ENCODE measurements at regions of chrX and their contacts with region 1.

Region 1: GRCh38 chrX:101595739-101596419 is 21.9 kb downstream of the ARMCX6 start:
- DNase-seq: peak; percentile 48
- H3K4me3 ChIP-seq: no peak overlapping the region
- H3K27ac ChIP-seq: no peak overlapping the region
- H3K4me1 ChIP-seq: no peaks in the 10 kb centered on the region
- H3K27me3 ChIP-seq: no peaks in the 10 kb centered on the region
- CTCF ChIP-seq: peak; percentile 55 to 57

Region 2: GRCh38 chrX:101415180-101416145 is 180.4 kb before region 1 on chrX:
- CTCF ChIA-PET with region 1: no interaction called
- dilution Hi-C with region 1: no loop called
- in situ Hi-C with region 1: no loop called
- intact Hi-C with region 1: loop called (anchors 5 kb)
- DNase-seq: peak; percentile 53
- H3K4me3 ChIP-seq: no peak overlapping the region
- H3K27ac ChIP-seq: no peak overlapping the region
- H3K4me1 ChIP-seq: peaks cover 3% of the 10 kb centered on the region
- H3K27me3 ChIP-seq: no peaks in the 10 kb centered on the region
- CTCF ChIP-seq: peak; percentile 62 to 78

Region 3: DNA sequence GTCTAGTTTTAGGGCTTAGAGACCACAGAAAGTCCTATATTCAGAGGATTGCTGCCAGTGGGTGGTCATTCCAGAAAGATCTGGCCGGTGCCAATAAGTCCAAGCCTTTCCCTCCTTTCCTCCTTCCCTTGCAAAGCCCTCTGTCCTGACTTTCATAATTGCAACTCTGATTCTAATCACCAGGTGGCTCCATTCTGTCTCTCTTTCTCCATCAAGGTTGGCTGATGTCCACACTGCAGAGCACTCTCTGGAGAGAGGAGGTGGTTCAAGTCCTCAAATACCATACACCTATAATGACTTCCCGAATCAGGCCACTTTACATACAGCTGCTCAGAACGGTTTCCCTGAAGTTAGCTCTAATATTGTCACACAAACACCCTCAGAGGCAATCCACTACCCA is 133.0 kb before region 1 on chrX:
- CTCF ChIA-PET with region 1: no interaction called
- dilution Hi-C with region 1: no loop called
- in situ Hi-C with region 1: no loop called
- intact Hi-C with region 1: loop called (anchors 10 kb)
- DNase-seq: peak; percentile 16
- H3K4me3 ChIP-seq: no peak overlapping the region
- H3K27ac ChIP-seq: no peak overlapping the region
- H3K4me1 ChIP-seq: no peaks in the 10 kb centered on the region
- H3K27me3 ChIP-seq: no peaks in the 10 kb centered on the region
- CTCF ChIP-seq: peak; percentile 26 to 62

Region 4: GRCh38 chrX:101655534-101655933 is 59.7 kb after region 1 on chrX:
- CTCF ChIA-PET with region 1: no interaction called
- dilution Hi-C with region 1: no loop called
- in situ Hi-C with region 1: no loop called
- intact Hi-C with region 1: no loop called
- DNase-seq: no peak
- H3K4me3 ChIP-seq: no peak overlapping the region
- H3K27ac ChIP-seq: no peak overlapping the region
- H3K4me1 ChIP-seq: no peaks in the 10 kb centered on the region
- H3K27me3 ChIP-seq: peaks cover 3% of the 10 kb centered on the region
- CTCF ChIP-seq: no peak

Region 5: DNA sequence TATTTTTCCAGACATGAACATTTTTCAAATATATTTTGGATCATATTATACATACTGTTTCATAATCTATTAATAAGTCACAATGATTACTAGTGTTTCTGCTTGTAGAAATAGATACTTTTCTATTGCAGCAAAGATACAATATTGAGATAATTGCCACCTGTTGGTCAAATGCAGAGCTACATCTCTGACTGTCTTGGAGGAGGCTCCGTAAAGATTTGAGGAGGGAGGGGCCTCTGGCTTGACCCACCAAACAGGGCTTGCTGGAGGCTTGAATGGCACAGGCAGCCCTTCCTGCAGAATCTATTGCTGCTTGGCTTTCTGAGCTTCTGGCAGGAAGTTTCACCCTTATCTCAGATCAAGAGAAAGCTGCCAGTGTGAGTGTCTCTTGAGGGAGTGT is 163.1 kb after region 1 on chrX:
- CTCF ChIA-PET with region 1: no interaction called
- dilution Hi-C with region 1: no loop called
- in situ Hi-C with region 1: loop called in 1 of 2 experiments (anchors 25 kb)
- intact Hi-C with region 1: loop called (anchors 5 kb)
- DNase-seq: peak; percentile 1
- H3K4me3 ChIP-seq: no peak overlapping the region
- H3K27ac ChIP-seq: no peak overlapping the region
- H3K4me1 ChIP-seq: no peaks in the 10 kb centered on the region
- H3K27me3 ChIP-seq: no peaks in the 10 kb centered on the region
- CTCF ChIP-seq: peak; percentile 44 to 55

Region 6: DNA sequence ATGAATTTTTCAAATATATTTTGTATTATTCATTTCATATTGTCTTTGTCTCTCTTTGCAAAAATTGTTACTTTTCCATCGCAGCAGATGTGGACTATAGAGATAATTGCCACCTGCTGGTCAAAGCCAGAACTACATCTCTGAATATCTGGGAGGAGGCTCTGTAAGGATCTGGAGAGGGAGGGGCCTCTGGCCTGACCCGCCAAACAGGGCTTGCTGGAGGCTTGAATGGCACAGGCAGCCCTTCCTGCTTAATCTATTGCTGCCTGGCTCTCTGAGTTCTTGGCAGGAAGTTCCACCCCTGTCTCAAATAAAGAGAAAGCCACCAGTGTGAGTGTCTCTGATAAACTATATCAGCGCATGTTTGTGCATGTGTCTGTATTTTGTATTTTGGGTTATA is 203.5 kb after region 1 on chrX:
- CTCF ChIA-PET with region 1: no interaction called
- dilution Hi-C with region 1: no loop called
- in situ Hi-C with region 1: loop called in 1 of 2 experiments (anchors 10 kb)
- intact Hi-C with region 1: loop called (anchors 5 kb)
- DNase-seq: peak; percentile 78
- H3K4me3 ChIP-seq: no peak overlapping the region
- H3K27ac ChIP-seq: no peak overlapping the region
- H3K4me1 ChIP-seq: no peaks in the 10 kb centered on the region
- H3K27me3 ChIP-seq: no peaks in the 10 kb centered on the region
- CTCF ChIP-seq: peak; percentile 60 to 70

Measured in mammary epithelial cell (primary cell).